GM10248 (cell line): ENCODE measurements at regions of chr3 and their contacts with region 1.

Region 1: GRCh38 chr3:104596551-104596950 is 770.2 kb upstream of the ALCAM start:
- DNase-seq: peak; percentile 10
- CTCF ChIP-seq: peak; percentile 62

Region 2: DNA sequence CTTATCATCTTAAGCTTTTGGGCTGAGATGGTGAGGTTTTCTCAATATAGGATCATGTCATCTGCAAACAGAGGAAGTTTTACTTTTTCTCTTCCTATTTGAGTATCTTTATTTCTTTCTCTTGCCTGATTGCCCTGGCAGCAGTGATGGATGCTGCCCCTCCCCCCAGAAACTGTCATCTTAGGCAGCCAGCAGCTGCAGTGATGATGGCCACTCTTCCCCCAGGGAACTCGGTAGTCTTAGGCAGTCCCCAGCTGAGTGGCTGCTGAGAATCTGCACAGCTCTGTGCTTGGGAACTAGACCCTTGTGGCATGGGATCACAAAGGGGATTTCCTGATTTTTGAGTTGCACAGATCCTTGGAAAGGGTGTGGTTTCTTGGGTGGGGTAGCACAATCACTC is 20.9 kb before region 1 on chr3:
- CTCF ChIA-PET with region 1: no interaction called
- POLR2A ChIA-PET with region 1: no interaction called
- DNase-seq: no peak
- CTCF ChIP-seq: no peak

Region 3: DNA sequence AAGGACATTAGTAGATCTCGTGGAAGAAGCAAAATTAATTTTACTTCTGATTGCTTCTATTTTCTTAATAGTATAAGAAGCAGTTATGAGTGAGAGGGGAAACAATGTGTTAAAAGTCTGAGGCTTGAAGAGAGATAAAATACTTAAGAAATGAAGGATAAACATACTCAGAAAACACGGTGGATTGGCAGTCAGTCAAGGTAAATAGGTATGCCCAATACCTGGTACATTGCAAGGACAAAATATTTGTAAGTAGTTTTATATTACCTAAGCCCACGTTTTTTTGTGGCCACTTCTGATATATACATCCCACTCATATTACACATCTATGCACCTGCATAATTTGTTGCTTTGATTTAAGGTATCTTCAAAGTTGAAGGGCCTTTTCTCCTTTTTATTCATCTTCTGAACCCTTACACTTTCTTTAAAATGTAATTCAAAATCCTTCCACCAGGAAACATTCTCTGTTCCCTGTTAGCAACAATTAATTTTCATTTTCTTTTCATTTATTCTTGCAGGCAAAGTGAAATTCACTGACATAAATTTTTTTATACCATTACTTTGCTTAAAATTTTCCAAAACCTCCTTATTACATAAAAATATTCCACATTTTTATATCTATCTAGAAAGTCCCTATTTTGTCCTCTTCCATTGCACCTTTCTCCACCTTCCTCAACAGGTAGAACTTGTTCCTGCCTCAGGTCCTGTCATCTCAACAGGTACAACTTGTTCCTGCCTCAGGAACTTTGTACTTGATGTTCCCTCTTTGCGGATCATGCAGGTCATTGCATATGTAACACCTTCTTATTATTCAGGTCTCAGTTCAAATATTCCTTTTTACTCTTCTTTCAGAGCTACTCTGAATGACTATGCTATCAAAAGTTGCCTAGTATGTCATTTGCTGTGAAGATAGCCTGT is 14.4 kb after region 1 on chr3:
- CTCF ChIA-PET with region 1: interaction called, 16 read pairs
- POLR2A ChIA-PET with region 1: no interaction called
- DNase-seq: no peak
- CTCF ChIP-seq: no peak

Region 4: DNA sequence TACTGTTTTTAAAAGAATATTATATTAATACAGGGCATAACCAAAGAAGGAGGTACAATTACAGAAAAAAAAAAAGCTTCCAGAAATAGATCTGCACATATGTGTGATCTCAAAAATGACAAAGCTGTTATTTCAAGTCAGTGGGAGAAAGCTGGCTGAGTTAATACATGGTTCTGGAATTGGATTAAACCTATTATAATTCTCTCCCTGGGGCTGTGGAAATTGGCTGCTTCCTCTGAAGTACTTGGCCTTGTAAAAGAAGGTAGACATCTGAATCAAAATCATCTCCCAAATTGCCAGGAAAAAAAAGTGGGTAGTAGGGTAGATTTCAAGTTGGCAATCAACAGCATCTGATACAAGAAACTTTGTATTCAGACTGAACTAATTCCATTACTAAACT is 46.3 kb after region 1 on chr3:
- CTCF ChIA-PET with region 1: no interaction called
- POLR2A ChIA-PET with region 1: no interaction called
- DNase-seq: no peak
- CTCF ChIP-seq: no peak

Region 5: GRCh38 chr3:105322570-105323273 is 726.2 kb after region 1 on chr3:
- CTCF ChIA-PET with region 1: no interaction called
- POLR2A ChIA-PET with region 1: no interaction called
- DNase-seq: peak; percentile 29
- CTCF ChIP-seq: no peak

Region 6: GRCh38 chr3:105518806-105519418 is 922.4 kb after region 1 on chr3:
- CTCF ChIA-PET with region 1: interaction called, 10 read pairs
- POLR2A ChIA-PET with region 1: no interaction called
- DNase-seq: peak; percentile 45
- CTCF ChIP-seq: peak; percentile 50